Cardiac septum (tissue), 1 donor: ENCODE measurements at regions of chr14 and their contacts with region 1.

Region 1: DNA sequence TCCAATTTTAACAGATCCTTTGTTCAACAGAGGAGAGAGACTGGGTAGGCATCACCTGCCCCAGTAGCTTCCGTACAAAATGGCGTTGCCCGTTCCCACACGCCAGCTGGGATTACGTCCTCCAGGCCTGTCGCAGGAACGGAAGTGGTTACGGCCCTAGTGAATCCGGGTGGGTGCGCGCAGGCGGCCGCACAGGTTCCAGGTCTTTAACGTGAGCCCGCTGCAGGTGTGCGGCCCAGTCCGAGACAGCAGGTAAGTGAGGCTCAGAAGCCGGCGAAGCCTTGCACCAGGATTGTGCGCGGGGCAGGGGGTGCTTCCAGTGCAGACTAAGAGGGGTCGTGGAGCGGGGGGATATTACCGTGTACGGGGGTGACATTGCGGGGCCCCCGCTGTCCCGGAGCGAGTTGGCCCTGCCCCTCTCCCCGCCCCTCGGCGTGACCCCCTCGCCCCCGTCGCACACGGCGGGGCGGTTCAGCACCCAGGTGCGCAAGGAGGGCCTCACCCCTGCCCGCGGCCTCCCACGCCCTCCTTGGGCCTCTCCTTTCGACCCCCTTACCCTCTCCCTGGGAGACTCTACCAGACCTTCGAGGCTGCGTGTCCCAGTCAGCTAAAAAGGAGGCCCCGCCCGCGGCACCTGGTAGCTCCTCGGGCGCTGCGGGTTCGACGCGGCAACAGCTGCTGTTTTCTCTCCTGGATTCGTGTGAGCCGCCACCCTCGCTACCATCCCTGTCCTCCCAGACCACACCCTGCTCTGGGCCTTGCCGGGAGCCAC is at the start of gene EXD2:
- DNase-seq: peak; percentile 91
- total RNA-seq, gene EXD2: 18.2 TPM

Region 2: DNA sequence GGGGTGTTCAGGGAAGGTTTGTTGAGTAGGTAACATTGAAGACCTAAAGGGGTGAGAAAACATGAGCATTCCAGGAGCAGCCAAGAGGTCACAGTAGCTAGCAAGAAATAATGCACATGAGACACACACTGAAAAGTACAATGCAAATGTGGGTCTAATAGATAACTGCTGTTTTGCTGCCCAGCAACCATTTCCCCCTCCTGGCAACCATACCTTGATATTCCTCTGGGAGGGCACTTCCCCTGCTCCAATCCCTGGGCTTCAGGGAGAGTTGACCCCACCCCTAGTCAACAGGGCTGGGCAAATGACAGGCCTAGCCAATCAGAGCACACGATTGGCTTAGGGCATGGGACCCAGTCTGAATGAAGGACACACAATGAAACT is 203.9 kb before region 1 on chr14:
- intact Hi-C with region 1: no loop called
- DNase-seq: no peak

Region 3: GRCh38 chr14:69153131-69153872 is 38.2 kb before region 1 on chr14:
- intact Hi-C with region 1: loop called (anchors 2 kb)
- DNase-seq: peak; percentile 97